Activated B cell treated with CpG ODN at 0.5 μM for 24 hours (primary cell): ENCODE measurements at regions of chr2 and their contacts with region 1.

Region 1: GRCh38 chr2:231674587-231675338 is 33.6 kb upstream of the PTMA start:
- DNase-seq: peak; percentile 81
- ATAC-seq: peak; percentile 40
- H3K4me3 Mint-ChIP-seq: peak overlapping the region; percentile 64
- H3K27ac Mint-ChIP-seq: peak overlapping the region; percentile 98
- H3K4me1 Mint-ChIP-seq: peaks cover 77% of the 10 kb centered on the region
- H3K27me3 Mint-ChIP-seq: no peaks in the 10 kb centered on the region
- CTCF ChIP-seq: peak; percentile 83

Region 2: DNA sequence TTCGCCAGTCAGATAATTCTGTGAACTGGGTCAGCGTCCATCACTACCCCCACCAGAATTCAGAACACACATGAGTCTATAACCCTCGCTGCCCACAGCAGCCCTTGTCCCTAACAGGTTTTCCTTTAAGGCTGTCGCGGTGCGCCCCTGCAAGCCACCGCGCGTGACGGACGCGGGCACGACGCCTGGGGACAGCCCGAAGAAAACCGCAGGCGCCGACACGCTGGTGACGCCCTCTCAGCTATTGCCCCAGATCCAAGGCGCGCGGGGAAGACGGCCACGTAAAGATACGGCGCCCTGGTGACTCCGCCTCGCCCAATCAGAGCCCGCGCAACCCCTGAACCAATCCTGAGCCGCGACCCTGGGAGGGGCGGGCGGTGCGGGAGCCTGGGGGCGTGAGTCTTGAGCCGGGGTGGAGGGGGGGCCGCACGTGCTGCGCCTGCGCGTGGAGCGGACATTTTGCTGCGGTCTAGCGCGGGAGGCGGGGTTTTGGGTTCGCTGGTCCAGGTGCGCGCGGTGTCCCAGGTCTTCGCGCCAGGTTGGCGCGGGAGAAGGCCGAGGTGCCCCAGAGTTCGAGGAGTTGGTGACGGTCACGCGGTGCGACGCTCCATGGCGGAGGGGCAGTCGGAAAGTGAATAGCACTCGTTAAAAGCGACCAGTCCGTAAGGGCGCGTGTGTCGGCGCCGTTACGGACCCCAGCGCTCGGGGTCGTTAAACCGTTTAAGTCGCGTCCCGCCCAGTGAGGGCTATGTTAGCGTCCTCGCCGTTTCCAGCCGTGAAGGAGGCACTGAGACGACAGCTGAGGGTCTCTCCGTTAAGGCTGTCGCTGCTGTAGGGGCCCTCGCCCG is 160.4 kb before region 1 on chr2:
- CTCF ChIA-PET with region 1: interaction called, 5 read pairs
- POLR2A ChIA-PET with region 1: interaction called, 4 read pairs
- intact Hi-C with region 1: loop called (anchors 1 kb)
- DNase-seq: peak; percentile 97
- ATAC-seq: peak; percentile 99
- H3K4me3 Mint-ChIP-seq: peak overlapping the region; percentile 92
- H3K27ac Mint-ChIP-seq: peak overlapping the region; percentile 96
- H3K4me1 Mint-ChIP-seq: peaks cover 13% of the 10 kb centered on the region
- H3K27me3 Mint-ChIP-seq: no peaks in the 10 kb centered on the region
- CTCF ChIP-seq: no peak

Region 3: DNA sequence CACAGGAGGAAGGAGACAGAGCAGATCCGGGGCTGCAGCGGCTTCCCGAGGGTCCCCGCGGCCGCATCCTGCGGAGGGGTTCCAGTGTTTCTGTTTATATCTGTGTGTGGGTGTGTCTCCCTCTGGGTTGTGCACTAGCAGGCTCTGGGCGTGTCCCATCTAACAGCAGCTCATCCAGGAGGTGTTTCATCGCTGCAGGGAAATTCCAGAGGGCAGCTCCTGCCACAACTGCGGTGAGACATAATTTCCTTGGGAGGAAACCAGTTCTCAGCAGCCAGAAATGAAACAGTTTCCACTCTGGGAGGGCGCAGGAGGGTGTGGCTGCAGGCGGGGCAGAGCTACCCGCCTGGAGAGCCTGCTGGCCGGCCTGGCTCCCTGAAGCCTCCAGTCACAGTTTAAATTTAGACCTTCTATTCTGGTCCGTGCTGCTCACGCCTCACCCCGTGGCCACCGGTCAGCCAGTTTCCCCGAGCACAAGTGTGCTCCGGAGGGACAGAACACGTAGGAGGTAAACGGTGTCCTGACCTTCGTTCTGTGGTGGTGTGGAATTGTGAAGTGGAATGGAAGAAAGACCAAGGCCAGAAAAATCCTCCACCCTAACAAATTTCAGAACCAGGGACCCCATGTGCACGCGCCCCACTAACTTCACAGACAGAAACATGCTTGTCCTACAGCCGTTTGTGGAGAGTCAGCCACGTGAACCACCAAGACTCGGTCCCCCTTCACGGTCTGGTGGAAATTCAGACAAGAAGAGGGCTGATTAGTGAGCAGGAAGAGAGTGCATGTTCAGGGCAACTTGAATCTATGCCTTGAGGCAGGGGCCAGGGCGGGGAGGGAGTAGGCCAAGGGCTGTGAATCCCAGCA is 31.9 kb before region 1 on chr2:
- CTCF ChIA-PET with region 1: interaction called, 187 read pairs
- POLR2A ChIA-PET with region 1: interaction called, 528 read pairs
- intact Hi-C with region 1: loop called (anchors 1 kb)
- DNase-seq: peak; percentile 39
- ATAC-seq: peak; percentile 80
- H3K4me3 Mint-ChIP-seq: peak overlapping the region; percentile 80
- H3K27ac Mint-ChIP-seq: peak overlapping the region; percentile 66
- H3K4me1 Mint-ChIP-seq: peaks cover 16% of the 10 kb centered on the region
- H3K27me3 Mint-ChIP-seq: no peaks in the 10 kb centered on the region
- CTCF ChIP-seq: no peak

Region 4: DNA sequence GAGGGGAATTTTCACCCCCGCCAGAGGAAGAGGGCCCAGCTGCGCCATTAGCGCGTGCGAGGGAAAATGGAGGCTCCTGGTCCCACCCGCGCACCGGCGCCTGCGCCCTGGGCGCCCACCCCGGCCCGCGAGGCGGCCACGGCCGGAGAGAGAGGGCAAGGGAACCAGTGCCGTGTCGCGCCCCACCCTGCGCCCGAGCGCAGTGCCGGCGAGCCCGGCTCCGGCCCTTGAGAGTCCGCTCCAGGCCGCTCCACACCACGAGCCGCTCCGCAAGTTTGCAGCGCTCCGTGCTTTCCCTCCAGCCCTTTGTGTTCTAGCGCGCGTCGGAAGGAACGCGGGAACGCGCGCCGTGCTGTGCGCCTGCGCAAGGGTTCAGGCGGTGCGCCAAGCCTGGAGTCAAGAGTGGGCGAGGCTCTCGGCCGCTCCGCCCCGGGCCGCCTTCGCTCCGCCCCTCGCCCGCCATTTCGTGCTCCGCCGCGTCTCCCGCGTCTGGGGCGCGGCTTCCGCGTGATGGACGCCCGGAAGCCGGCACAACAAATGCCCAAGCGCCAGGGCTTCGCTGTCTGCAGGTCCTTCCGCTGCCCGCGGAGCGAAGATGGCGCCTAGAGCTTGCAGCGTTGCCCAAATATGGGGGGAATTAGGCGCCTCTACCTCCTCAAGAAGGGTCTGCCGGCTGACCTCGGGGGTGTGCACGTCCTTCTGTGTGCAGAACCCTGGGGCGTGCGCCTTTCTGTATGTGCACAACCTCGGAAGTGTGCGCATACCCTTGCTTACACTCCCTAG is 12.5 kb before region 1 on chr2:
- CTCF ChIA-PET with region 1: interaction called, 25 read pairs
- POLR2A ChIA-PET with region 1: interaction called, 528 read pairs
- intact Hi-C with region 1: loop called (anchors 1 kb)
- DNase-seq: peak; percentile 97
- ATAC-seq: peak; percentile 78
- H3K4me3 Mint-ChIP-seq: peak overlapping the region; percentile 74
- H3K27ac Mint-ChIP-seq: peak overlapping the region; percentile 92
- H3K4me1 Mint-ChIP-seq: peaks cover 67% of the 10 kb centered on the region
- H3K27me3 Mint-ChIP-seq: no peaks in the 10 kb centered on the region
- CTCF ChIP-seq: no peak

Region 5: GRCh38 chr2:231713730-231714430 is 39.1 kb after region 1 on chr2:
- CTCF ChIA-PET with region 1: interaction called, 429 read pairs
- POLR2A ChIA-PET with region 1: interaction called, 717 read pairs
- intact Hi-C with region 1: loop called (anchors 1 kb)
- DNase-seq: peak; percentile 82
- ATAC-seq: peak; percentile 15
- H3K4me3 Mint-ChIP-seq: peak overlapping the region; percentile 55
- H3K27ac Mint-ChIP-seq: peak overlapping the region; percentile 91
- H3K4me1 Mint-ChIP-seq: peaks cover 70% of the 10 kb centered on the region
- H3K27me3 Mint-ChIP-seq: no peaks in the 10 kb centered on the region
- CTCF ChIP-seq: no peak

Region 6: GRCh38 chr2:231786177-231786916 is 111.6 kb after region 1 on chr2 and contains the start of gene COPS7B:
- CTCF ChIA-PET with region 1: interaction called, 3 read pairs
- POLR2A ChIA-PET with region 1: interaction called, 11 read pairs
- intact Hi-C with region 1: loop called (anchors 1 kb)
- DNase-seq: peak; percentile 78
- ATAC-seq: peak; percentile 59
- H3K4me3 Mint-ChIP-seq: peak within 1 kb of the TSS; percentile 92
- H3K27ac Mint-ChIP-seq: peak within 1 kb of the TSS; percentile 82
- H3K4me1 Mint-ChIP-seq: peaks cover 54% of the 10 kb centered on the region
- H3K27me3 Mint-ChIP-seq: no peaks in the 10 kb centered on the region
- CTCF ChIP-seq: no peak
- total RNA-seq, gene COPS7B: 49.9 and 54.5 TPM in 2 replicates